GM13977 (cell line): ENCODE measurements at regions of chr2 and their contacts with region 1.

Region 1: GRCh38 chr2:58046585-58047372 is at the start of gene VRK2:
- DNase-seq: peak; percentile 87
- CTCF ChIP-seq: no peak

Region 2: GRCh38 chr2:57759822-57760300 is 286.9 kb before region 1 on chr2:
- in situ Hi-C with region 1: loop called (anchors 25 kb)
- DNase-seq: peak; percentile 61
- CTCF ChIP-seq: peak; percentile 95

Region 3: DNA sequence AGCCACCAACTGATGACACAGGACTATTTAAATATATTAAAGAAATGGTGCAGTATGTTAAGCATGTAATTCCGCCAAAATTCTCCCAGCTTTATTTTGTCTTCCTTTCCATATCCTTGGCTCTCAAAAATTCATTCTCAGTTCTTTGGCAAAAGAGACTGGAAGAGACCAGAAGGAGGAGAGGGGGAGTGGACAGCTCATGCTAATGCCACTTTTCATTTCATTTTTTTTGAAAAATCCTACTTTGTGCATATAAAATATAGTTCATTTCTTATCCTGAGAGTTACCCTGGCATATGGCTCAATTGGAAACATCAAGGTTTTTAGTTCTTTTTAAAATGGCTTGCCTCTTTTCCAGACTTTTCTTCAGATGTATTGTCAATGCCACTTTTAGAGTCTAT is 128.7 kb before region 1 on chr2:
- in situ Hi-C with region 1: loop called (anchors 10 kb)
- DNase-seq: no peak
- CTCF ChIP-seq: no peak

Region 4: GRCh38 chr2:58508006-58508405 is 461.2 kb after region 1 on chr2:
- in situ Hi-C with region 1: no loop called
- DNase-seq: no peak
- CTCF ChIP-seq: no peak

Region 5: DNA sequence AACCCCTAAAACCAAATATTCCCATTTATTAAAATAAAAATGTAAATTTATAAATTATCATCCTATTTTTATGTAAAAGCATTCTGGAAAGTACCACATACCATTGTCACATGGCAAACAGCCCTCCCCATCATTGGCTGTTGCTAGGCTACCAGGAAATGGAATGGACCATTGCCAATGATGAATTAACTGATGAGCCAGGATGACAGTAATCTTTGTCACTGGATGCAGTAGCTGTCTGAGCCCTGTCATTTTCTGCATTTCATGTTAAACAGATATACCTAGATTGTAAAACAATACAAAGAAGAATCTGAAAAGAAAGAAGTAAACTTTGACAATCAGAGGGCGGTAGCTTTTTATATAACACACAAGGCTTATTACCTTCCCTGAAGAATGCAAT is 1865.3 kb after region 1 on chr2:
- in situ Hi-C with region 1: no loop called
- DNase-seq: no peak
- CTCF ChIP-seq: no peak